ENCODE measurements at regions of chr17 and their contacts with region 1.

Region 1: GRCh38 chr17:82698065-82698973 is at the start of gene RAB40B:
- DNase-seq: peak; percentile 98
- ATAC-seq: peak; percentile 99
- H3K4me3 ChIP-seq: peak within 1 kb of the TSS; percentile 89
- H3K27ac ChIP-seq: no peak within 1 kb of the TSS; the same call in 1 of the 2 replicates
- H3K4me1 ChIP-seq: peaks cover 6% of the 10 kb centered on the region; the same call in 1 of the 2 replicates
- H3K27me3 ChIP-seq: peaks cover 2% of the 10 kb centered on the region; the same call in 1 of the 2 replicates
- CTCF ChIP-seq: no peak
- POLR2A ChIP-seq: no peak
- RAD21 ChIP-seq: no peak
- total RNA-seq, gene RAB40B: 10.8 and 14.9 TPM in 2 replicates

Region 2: DNA sequence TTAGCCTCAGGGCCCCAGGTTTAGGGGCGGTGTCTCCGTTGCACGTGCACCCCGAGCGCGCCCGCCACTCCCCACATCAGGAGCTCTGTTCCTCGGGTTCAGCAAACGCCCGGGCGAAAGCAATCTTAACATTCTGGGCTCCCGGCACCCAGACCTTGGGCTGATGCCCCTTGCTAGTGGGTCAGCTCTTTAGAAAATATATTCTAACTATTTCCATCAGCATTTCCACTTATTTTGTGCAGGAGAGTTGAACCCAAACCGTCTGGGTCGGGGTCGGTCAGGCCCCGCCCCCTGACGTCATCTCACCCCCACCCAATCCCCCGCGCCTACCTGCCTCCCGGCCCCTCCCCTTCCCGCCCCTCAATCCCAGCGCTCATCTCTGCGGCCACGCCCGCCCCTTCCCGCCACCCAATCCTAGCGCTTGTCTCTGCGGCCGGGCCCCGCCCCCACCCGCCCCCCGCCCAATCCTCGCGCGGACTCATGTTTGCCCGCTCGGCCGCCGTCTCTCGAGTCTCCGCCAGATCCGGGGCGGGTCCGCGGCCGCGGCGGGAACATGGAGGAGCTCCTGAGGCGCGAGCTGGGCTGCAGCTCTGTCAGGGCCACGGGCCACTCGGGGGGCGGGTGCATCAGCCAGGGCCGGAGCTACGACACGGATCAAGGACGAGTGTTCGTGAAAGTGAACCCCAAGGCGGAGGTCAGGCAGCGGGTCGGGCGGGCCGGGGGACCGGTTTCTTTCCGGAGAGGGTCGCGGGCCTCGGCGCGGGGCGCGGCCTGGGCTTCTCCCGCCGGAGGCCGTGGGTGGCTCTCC is 18.1 kb after region 1 on chr17 and contains the start of gene FN3KRP:
- CTCF ChIA-PET with region 1: no interaction called
- POLR2A ChIA-PET with region 1: interaction called, 10 read pairs
- dilution Hi-C with region 1: no loop called
- in situ Hi-C with region 1: no loop called
- intact Hi-C with region 1: no loop called
- DNase-seq: peak; percentile 83
- ATAC-seq: peak; percentile 96
- H3K4me3 ChIP-seq: peak within 1 kb of the TSS; percentile 94
- H3K27ac ChIP-seq: peak within 1 kb of the TSS; percentile 87
- H3K4me1 ChIP-seq: peaks cover 7% of the 10 kb centered on the region
- H3K27me3 ChIP-seq: peaks cover 5% of the 10 kb centered on the region; the same call in 1 of the 2 replicates
- CTCF ChIP-seq: no peak
- POLR2A ChIP-seq: peak; percentile 70
- RAD21 ChIP-seq: no peak
- total RNA-seq, gene FN3KRP: 18.6 and 20.6 TPM in 2 replicates

Region 3: GRCh38 chr17:82751571-82752370 is 53.5 kb after region 1 on chr17 and contains the start of gene TBCD:
- CTCF ChIA-PET with region 1: no interaction called
- POLR2A ChIA-PET with region 1: no interaction called
- dilution Hi-C with region 1: no loop called
- in situ Hi-C with region 1: no loop called
- intact Hi-C with region 1: loop called (anchors 2 kb)
- DNase-seq: peak; percentile 89
- ATAC-seq: peak; percentile 91
- H3K4me3 ChIP-seq: peak within 1 kb of the TSS; percentile 93
- H3K27ac ChIP-seq: peak within 1 kb of the TSS; percentile 88
- H3K4me1 ChIP-seq: peaks cover 4% of the 10 kb centered on the region
- H3K27me3 ChIP-seq: no peaks in the 10 kb centered on the region
- CTCF ChIP-seq: no peak
- POLR2A ChIP-seq: peak; percentile 20; the same call in 1 of the 2 replicates
- RAD21 ChIP-seq: no peak
- total RNA-seq, gene TBCD: 21.7 and 21.9 TPM in 2 replicates

Measured in IMR-90 (cell line).